ENCODE measurements at regions of chr16 and their contacts with region 1.

Region 1: GRCh38 chr16:75471723-75472633 is 7.5 kb upstream of the TMEM170A start:
- DNase-seq: peak; percentile 59 to 85
- H3K4me3 ChIP-seq: no peak overlapping the region
- H3K27ac ChIP-seq: no peak overlapping the region
- H3K4me1 ChIP-seq: no peaks in the 10 kb centered on the region
- H3K27me3 ChIP-seq: no peaks in the 10 kb centered on the region
- CTCF ChIP-seq: peak in 5 of 7 experiments; percentile 61 to 76 (median 68)
- EP300 ChIP-seq: no peak
- POLR2A ChIP-seq: no peak

Region 2: DNA sequence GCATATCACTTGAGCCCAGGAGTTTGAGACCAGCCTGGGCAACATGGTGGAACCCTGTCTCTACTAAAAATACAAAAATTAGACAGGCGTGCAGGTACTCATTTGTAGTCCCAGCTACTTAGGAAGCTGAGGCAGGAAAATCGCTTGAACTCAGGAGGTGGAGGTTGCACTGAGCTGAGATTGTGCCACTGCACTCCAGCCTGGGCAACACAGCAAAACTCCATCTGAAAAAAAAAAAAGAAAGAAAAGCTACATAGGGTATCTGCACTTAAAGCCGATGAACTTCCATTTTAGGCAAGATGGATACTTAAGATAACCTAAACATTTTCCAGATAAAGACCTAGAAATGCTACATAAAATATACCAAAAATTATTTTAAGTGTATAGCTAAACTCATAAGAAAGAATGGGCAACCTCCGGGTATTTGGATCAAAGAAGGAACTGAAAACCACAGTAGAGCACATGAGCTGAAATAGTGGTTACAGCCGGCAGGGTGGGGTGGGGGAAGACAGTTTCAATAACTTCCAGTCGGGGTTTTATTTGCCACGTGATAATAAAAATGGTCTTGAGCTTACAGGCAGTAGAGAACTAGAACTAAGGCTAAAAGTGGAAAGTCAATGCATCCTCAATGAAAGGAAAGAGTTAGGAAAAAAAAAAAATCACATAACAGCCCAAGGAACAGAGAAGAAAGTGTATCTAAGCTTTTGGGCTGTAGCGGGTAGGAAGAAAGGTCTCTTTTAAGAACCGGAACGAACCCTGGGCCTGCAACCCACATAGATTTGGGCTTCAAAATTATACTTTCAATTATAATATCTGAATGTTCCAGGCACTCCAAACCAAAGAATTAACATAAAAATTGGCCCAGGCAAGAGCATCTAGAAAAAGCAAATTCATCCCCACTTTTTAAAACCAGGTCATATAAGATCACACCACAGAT is 91.8 kb before region 1 on chr16:
- intact Hi-C with region 1: no loop called
- DNase-seq: peak in 1 of 2 donors; percentile 36
- H3K4me3 ChIP-seq: no peak overlapping the region
- H3K27ac ChIP-seq: peak overlapping the region in 2 of 5 donors; percentile 17 to 24
- H3K4me1 ChIP-seq: peaks cover 0 to 41% (median 1%) of the 10 kb centered on the region in 4 donors
- H3K27me3 ChIP-seq: no peaks in the 10 kb centered on the region
- CTCF ChIP-seq: no peak
- EP300 ChIP-seq: no peak
- POLR2A ChIP-seq: no peak

Region 3: GRCh38 chr16:75570396-75571065 is 98.6 kb after region 1 on chr16:
- intact Hi-C with region 1: loop called (anchors 5 kb)
- DNase-seq: peak in 1 of 2 donors; percentile 18
- H3K4me3 ChIP-seq: no peak overlapping the region
- H3K27ac ChIP-seq: peak overlapping the region in 2 of 5 donors; percentile 3 to 27
- H3K4me1 ChIP-seq: peaks cover 13 to 76% (median 57%) of the 10 kb centered on the region in 4 donors
- H3K27me3 ChIP-seq: no peaks in the 10 kb centered on the region
- CTCF ChIP-seq: no peak
- EP300 ChIP-seq: no peak
- POLR2A ChIP-seq: no peak

Region 4: GRCh38 chr16:75614066-75614897 is 142.3 kb after region 1 on chr16:
- intact Hi-C with region 1: loop called (anchors 10 kb)
- DNase-seq: no peak
- H3K4me3 ChIP-seq: no peak overlapping the region
- H3K27ac ChIP-seq: no peak overlapping the region
- H3K4me1 ChIP-seq: no peaks in the 10 kb centered on the region
- H3K27me3 ChIP-seq: no peaks in the 10 kb centered on the region
- CTCF ChIP-seq: no peak
- EP300 ChIP-seq: no peak
- POLR2A ChIP-seq: no peak